ENCODE measurements at regions of chr7 and their contacts with region 1.

Region 1: GRCh38 chr7:106346678-106347217 is 62.0 kb upstream of the NAMPT start:
- DNase-seq: peak; percentile 75
- H3K4me3 Mint-ChIP-seq: peak overlapping the region; percentile 15
- H3K27ac Mint-ChIP-seq: peak overlapping the region; percentile 97
- H3K4me1 Mint-ChIP-seq: peaks cover 55% of the 10 kb centered on the region
- H3K27me3 Mint-ChIP-seq: peaks cover 6% of the 10 kb centered on the region

Region 2: GRCh38 chr7:106071356-106071998 is 275.3 kb before region 1 on chr7:
- CTCF ChIA-PET with region 1: no interaction called
- intact Hi-C with region 1: loop called (anchors 1 kb)
- DNase-seq: peak; percentile 78
- H3K4me3 Mint-ChIP-seq: peak overlapping the region; percentile 65
- H3K27ac Mint-ChIP-seq: peak overlapping the region; percentile 91
- H3K4me1 Mint-ChIP-seq: peaks cover 34% of the 10 kb centered on the region
- H3K27me3 Mint-ChIP-seq: no peaks in the 10 kb centered on the region

Region 3: DNA sequence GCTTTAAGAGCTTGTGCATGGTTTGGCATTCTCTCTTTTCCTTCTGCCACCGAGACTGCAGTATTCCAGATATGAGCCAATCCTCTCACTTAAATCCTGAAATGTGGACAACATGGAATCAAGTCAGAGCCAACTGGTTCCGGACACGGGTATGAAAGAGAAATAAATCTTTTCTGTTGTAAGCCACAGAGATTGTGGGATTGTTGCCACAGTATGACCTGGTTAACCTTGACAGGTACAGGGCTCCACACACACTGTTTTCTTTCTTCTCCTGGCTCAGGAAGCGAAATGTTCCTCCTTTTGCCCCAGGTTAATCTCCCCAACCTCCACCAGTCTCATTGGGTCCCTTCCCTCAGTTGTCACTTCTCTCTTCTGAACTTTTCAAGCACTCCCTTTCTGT is 55.5 kb before region 1 on chr7:
- CTCF ChIA-PET with region 1: no interaction called
- intact Hi-C with region 1: no loop called
- DNase-seq: no peak
- H3K4me3 Mint-ChIP-seq: no peak overlapping the region
- H3K27ac Mint-ChIP-seq: no peak overlapping the region
- H3K4me1 Mint-ChIP-seq: peaks cover 23% of the 10 kb centered on the region
- H3K27me3 Mint-ChIP-seq: peaks cover 7% of the 10 kb centered on the region

Region 4: DNA sequence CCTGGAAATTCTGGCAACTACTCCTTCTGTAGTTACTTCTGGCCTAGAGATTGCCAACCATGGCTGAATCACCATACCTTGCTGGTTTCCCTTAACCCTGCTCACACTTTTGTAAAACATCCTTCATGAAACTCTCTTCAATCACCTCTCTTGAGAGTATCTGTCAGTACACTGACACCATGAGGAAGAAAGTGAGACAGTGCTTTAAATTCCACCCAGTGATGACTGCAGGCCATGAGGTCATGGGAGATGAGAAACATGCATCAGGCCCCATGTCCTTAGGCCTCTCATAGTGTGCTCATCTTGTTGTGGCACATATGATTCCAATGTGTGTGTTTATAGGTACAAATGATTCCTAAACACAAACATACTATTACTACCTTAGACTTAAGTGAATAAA is 37.4 kb before region 1 on chr7:
- CTCF ChIA-PET with region 1: no interaction called
- intact Hi-C with region 1: loop called (anchors 1 kb)
- DNase-seq: peak; percentile 66
- H3K4me3 Mint-ChIP-seq: no peak overlapping the region
- H3K27ac Mint-ChIP-seq: no peak overlapping the region
- H3K4me1 Mint-ChIP-seq: peaks cover 24% of the 10 kb centered on the region
- H3K27me3 Mint-ChIP-seq: peaks cover 11% of the 10 kb centered on the region

Region 5: DNA sequence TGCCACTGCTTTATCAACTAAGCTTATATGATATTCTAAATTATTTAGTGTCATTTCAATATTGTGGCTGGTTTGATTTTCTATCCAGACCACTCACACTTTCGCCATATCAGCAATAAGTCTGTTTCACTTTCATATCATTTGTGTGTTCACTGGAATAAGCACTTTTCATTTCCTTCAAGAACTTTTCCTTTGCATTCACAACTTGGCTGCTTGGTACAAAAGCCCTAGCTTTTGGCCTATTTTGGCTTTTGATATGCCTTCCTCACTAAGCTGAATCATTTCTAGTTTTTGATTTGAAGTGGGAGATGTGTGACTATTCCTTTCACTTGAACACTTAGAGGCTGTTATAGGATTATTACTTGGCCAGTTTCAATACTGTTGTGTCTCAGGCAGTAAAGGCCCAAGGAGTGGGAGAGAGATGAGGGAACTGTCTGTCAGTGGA is 59.0 kb after region 1 on chr7:
- CTCF ChIA-PET with region 1: no interaction called
- intact Hi-C with region 1: loop called (anchors 1 kb)
- DNase-seq: peak; percentile 53
- H3K4me3 Mint-ChIP-seq: no peak overlapping the region
- H3K27ac Mint-ChIP-seq: peak overlapping the region; percentile 50
- H3K4me1 Mint-ChIP-seq: peaks cover 32% of the 10 kb centered on the region
- H3K27me3 Mint-ChIP-seq: peaks cover 44% of the 10 kb centered on the region

Region 6: DNA sequence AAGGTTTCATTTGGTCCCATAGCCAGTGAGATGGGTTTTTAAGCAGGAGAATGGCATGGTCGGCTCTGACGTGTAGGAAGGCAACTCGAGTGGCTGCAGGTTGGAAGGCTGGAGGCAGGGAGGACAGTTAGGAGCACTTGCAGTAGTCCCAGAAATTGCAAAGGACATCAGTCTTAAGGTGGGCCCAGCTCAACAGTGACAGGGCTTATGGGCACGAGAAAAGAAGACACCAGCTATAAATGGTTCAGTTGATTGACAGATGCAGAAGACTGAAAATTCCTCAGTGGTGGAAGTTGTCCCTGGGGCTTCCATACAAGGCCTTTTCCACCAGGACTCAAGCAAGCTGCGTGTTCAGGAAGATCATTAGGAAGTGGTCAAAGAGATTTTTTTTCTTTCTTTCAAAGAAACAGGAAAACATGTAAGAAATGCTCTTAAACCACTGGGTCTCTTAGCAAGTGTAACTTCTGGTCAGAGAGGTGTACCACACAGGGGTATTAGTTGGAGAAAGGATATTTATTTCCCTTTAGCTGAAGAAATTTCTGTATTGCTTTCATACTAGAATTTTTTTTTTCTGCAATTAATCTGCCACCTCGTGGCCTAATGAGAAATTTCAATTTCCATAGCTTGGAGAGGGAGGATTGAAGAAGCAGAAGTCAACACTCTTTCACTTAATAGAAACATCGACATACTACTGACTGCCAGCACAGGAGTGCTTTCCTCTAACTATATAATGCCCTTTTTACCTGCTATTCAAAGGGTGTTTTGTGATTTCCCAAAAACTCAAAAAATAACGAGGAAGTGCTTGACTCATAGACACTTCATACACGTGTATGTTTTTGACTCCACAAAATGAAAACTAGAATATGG is 115.5 kb after region 1 on chr7:
- CTCF ChIA-PET with region 1: interaction called, 3 read pairs
- intact Hi-C with region 1: loop called (anchors 1 kb)
- DNase-seq: peak; percentile 29
- H3K4me3 Mint-ChIP-seq: no peak overlapping the region
- H3K27ac Mint-ChIP-seq: peak overlapping the region; percentile 50
- H3K4me1 Mint-ChIP-seq: peaks cover 29% of the 10 kb centered on the region
- H3K27me3 Mint-ChIP-seq: no peaks in the 10 kb centered on the region

Region 7: DNA sequence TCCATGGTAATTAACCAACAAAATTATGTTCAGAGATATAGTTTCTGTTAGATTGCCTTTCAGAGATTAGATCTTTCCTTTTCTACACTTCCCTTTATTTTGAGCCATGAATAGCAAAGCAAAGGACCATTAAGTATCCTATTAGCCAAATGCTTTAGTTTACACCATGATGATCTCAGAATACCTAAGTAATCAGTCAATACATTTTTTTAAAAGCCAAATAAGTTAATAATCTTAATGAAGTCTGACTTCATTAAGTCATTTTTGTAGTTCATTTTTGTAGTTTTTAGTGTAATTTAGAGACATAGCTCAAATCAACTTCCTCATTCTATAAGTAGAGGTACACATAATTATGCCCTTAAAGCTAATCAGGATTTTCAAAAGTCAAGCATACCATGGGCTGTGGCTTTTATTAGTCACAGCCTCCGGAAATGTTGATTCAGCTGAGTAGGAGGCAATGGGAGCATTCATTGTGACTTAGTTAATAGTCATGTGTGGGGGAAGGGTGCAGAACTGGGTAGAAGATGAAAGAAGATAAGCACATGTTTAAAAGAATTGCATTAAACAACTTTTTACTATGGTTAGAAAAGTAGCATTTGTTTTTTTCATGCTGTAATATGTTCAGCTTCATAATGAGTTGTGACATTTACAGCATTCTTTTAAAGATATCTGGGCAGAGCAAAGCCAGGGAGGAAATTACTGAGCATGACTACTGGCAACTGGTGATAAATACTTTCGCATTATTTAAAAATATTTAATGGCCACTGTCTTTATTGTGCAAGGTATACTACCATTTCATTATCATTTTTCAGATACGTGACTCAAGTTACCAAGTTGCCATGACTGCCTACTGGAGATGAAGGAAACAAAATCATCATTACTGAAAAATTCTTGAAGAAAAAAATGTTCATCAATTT is 371.5 kb after region 1 on chr7:
- CTCF ChIA-PET with region 1: no interaction called
- intact Hi-C with region 1: loop called (anchors 1 kb)
- DNase-seq: peak; percentile 92
- H3K4me3 Mint-ChIP-seq: no peak overlapping the region
- H3K27ac Mint-ChIP-seq: no peak overlapping the region
- H3K4me1 Mint-ChIP-seq: peaks cover 10% of the 10 kb centered on the region
- H3K27me3 Mint-ChIP-seq: no peaks in the 10 kb centered on the region

Region 8: DNA sequence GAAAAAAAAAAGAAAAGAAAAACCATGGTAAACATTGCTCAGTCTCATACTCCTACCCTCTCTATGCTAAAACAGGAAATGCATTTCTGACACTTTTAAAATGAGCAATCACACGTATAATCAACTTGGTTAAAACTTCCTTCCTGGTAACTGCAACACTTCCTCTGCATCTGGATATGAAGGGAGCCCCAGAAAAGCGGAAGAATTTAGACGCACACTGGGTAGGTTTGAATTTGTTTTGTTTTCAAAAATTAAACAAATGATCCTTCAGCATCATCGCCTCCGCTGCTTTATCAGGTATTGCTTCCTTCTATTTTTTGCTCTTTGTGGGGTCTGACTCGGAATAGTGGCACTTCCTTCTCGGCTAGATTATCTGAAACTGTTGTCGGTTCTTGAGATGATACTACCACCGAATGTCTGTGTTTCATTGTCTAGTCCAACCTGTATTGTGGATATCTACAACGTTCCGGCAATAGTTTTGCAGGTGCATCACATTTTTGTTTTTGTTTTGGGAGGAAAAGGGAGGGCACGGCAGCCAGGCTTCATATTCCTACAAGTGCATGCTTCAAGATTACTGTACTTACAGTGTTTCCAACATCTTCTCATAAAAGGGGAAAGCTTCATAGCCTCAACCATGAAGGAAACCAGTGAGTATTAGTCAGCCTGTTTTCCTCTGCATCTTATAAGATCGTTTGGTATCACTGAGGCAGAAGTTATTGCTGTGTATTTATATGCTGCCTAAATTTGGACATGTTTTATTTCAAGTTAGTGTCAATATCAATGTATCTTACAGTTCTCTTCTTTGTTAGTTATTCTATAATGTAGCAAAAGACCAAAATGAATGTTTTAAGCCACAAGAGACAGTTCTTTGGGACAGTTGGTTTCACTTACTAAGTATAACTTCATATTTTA is 518.6 kb after region 1 on chr7 and contains the start of gene PIK3CG:
- CTCF ChIA-PET with region 1: no interaction called
- intact Hi-C with region 1: loop called (anchors 1 kb)
- DNase-seq: no peak
- H3K4me3 Mint-ChIP-seq: peak within 1 kb of the TSS; percentile 79
- H3K27ac Mint-ChIP-seq: peak within 1 kb of the TSS; percentile 65
- H3K4me1 Mint-ChIP-seq: peaks cover 77% of the 10 kb centered on the region
- H3K27me3 Mint-ChIP-seq: no peaks in the 10 kb centered on the region
- total RNA-seq, gene PIK3CG: 3.6 to 3.8 TPM

Measured in activated naive CD4-positive, alpha-beta T cell treated with anti-CD3 and anti-CD28 coated beads for 36 hours (primary cell).